Cardiac septum (tissue), 1 donor: ENCODE measurements at regions of chr7 and their contacts with region 1.

Region 1: GRCh38 chr7:140876519-140877248 is 48.0 kb downstream of the BRAF start:
- DNase-seq: no peak

Region 2: GRCh38 chr7:140924019-140924820 is 47.5 kb after region 1 on chr7:
- intact Hi-C with region 1: loop called (anchors 10 kb)
- DNase-seq: peak; percentile 86

Region 3: DNA sequence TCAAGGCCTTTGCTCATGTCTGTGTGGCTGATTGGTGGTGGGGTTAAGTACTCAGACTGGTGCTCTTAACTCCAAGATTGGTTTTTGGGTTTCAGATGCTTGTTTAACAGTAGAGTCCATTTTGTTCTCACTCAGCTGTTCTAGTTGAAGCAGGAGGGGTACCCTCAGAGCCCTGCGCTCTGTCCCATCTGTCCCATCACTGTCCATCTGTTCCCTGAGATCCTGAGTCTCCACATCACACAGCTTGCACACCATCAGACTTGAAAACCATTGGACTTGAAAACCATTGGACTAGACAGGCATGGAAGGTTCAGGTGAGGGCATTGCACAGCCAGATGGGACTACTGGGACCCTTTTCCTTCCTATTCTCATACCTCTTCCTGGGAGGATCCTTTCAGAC is 236.4 kb after region 1 on chr7:
- intact Hi-C with region 1: no loop called
- DNase-seq: no peak